Breast epithelium (tissue), 4 donors: ENCODE measurements at regions of chr4 and their contacts with region 1.

Region 1: DNA sequence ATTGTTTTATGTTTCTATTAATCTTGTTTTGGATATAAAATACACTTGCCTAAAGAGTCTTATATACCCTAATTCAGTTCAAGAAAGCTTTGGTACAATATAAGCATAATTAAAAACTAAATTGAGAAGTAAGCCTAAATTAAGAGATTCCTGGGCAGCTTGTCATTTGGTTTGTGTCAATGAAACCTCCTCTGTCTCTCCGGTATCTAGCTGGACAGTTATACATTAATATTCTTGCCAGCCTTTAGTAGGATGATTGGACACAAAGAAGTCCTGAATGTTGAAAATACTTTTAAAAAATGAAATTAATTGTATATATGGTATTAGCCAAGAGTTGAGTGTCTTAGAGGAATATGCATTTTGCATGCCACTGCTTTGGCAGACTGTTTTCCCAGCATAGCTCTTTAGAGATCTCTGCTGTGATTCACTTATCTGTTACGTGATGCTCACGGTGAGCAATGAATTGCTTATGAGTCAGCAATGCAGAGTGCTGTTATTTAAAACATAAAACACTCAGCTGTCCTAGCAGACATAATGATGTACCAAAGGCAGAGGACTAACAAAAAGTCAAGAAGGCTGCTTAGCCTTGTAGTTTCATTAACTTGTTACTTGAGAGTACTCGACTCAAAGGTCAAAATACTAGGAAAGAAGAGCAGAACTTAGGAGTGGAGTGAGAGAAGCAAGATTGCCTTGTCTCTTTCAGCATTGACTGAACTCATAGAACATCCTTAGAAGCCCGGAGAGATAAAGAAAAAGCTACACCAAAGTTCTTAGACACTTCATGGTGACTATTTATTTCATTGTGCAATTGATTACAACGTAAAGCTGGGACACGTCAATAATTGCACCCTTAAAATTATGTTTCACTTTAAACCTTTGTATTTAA is 1296.1 kb upstream of the PCDH7 start:
- DNase-seq: no peak
- H3K4me3 ChIP-seq: no peak overlapping the region
- H3K27ac ChIP-seq: no peak overlapping the region
- H3K4me1 ChIP-seq: no peaks in the 10 kb centered on the region
- H3K27me3 ChIP-seq: no peaks in the 10 kb centered on the region
- CTCF ChIP-seq: no peak
- POLR2A ChIP-seq: no peak

Region 2: GRCh38 chr4:29405116-29405515 is 19.0 kb before region 1 on chr4:
- intact Hi-C with region 1: no loop called
- DNase-seq: no peak
- H3K4me3 ChIP-seq: no peak overlapping the region
- H3K27ac ChIP-seq: no peak overlapping the region
- H3K4me1 ChIP-seq: no peaks in the 10 kb centered on the region
- H3K27me3 ChIP-seq: no peaks in the 10 kb centered on the region
- CTCF ChIP-seq: no peak
- POLR2A ChIP-seq: no peak

Region 3: GRCh38 chr4:29805245-29805644 is 381.2 kb after region 1 on chr4:
- intact Hi-C with region 1: loop called (anchors 5 kb)
- DNase-seq: no peak
- H3K4me3 ChIP-seq: no peak overlapping the region
- H3K27ac ChIP-seq: no peak overlapping the region
- H3K4me1 ChIP-seq: no peaks in the 10 kb centered on the region
- H3K27me3 ChIP-seq: no peaks in the 10 kb centered on the region
- CTCF ChIP-seq: no peak
- POLR2A ChIP-seq: no peak